Sigmoid colon (tissue), 7 donors: ENCODE measurements at regions of chr3 and their contacts with region 1.

Region 1: DNA sequence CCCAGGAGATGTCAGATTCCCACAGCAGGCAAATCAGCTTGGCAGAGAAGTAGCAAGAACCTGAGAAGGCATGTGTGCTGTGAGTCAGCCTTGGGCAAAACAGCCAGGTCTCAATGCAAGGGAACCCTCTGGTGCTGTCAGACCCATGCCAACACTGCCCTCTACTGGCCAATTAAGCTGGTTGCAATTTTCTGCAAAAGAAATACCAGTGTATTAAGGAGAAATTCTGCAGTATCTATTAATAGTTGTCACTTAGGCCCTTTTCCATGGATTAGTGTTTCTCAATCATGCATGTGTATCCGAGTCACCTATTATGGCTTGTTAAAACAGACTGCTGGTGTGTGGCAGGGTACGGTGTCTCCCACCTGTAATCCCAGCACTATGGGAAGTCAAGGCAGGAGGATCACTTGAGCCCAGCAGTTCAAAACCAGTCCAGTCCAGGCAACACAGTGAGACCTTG is 26.2 kb downstream of the MAP4 start:
- DNase-seq: peak; percentile 94
- H3K4me3 ChIP-seq: no peak overlapping the region
- H3K27ac ChIP-seq: peak overlapping the region in 2 of 4 donors; percentile 29 to 52
- H3K4me1 ChIP-seq: peaks cover 0 to 29% (median 11%) of the 10 kb centered on the region in 4 donors
- H3K27me3 ChIP-seq: no peaks in the 10 kb centered on the region
- CTCF ChIP-seq: peak; percentile 72 to 89 (median 86)
- EP300 ChIP-seq: no peak
- POLR2A ChIP-seq: no peak

Region 2: GRCh38 chr3:47836986-47837385 is 153.0 kb before region 1 on chr3:
- intact Hi-C with region 1: loop called (anchors 5 kb)
- DNase-seq: no peak
- H3K4me3 ChIP-seq: no peak overlapping the region
- H3K27ac ChIP-seq: no peak overlapping the region
- H3K4me1 ChIP-seq: no peaks in the 10 kb centered on the region
- H3K27me3 ChIP-seq: no peaks in the 10 kb centered on the region
- CTCF ChIP-seq: no peak
- EP300 ChIP-seq: no peak
- POLR2A ChIP-seq: no peak

Region 3: GRCh38 chr3:47890828-47891612 is 99.0 kb before region 1 on chr3:
- intact Hi-C with region 1: loop called (anchors 5 kb)
- DNase-seq: peak; percentile 92
- H3K4me3 ChIP-seq: no peak overlapping the region
- H3K27ac ChIP-seq: peak overlapping the region; percentile 37 to 75 (median 53)
- H3K4me1 ChIP-seq: peaks cover 0 to 34% (median 20%) of the 10 kb centered on the region in 4 donors
- H3K27me3 ChIP-seq: no peaks in the 10 kb centered on the region
- CTCF ChIP-seq: no peak
- EP300 ChIP-seq: peak in 1 of 4 donors; percentile 25
- POLR2A ChIP-seq: no peak

Region 4: DNA sequence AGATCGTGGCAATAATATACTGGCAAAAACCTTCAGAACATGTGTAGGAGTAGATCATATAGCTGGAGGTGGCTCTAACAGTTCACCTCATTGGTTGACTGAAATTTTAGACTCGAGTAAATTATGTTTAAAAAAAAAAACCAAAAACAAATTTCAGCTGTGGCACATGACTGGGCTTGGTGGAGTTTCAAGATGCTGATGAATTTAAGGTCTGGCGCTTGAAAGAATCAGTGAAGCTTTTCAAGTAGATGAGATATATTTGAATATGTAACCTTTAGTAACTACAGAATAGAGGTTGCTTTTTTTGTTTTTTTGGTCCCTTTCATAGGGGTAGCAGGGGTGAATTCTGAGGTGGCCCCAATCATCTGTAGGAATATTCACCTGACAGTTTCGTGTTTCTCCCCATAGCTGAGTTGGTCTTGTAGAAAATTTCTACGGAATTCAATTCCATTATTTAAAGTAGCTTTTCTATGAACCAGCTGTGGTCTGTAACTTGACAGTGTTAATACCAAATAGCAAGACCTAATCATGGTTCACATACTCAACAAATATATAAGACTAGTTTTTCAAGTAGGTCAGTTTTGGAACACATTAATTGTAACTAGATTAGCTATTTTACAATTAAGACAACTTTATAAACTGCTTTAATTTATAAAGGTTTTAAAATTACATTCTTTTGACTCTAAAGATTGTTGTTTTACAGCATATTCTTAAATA is 39.4 kb before region 1 on chr3:
- intact Hi-C with region 1: no loop called
- DNase-seq: no peak
- H3K4me3 ChIP-seq: no peak overlapping the region
- H3K27ac ChIP-seq: no peak overlapping the region
- H3K4me1 ChIP-seq: no peaks in the 10 kb centered on the region
- H3K27me3 ChIP-seq: no peaks in the 10 kb centered on the region
- CTCF ChIP-seq: no peak
- EP300 ChIP-seq: no peak
- POLR2A ChIP-seq: no peak

Region 5: GRCh38 chr3:48151058-48151806 is 161.2 kb after region 1 on chr3:
- intact Hi-C with region 1: loop called (anchors 2 kb)
- DNase-seq: peak; percentile 90
- H3K4me3 ChIP-seq: no peak overlapping the region
- H3K27ac ChIP-seq: peak overlapping the region in 3 of 4 donors; percentile 20 to 51 (median 49)
- H3K4me1 ChIP-seq: peaks cover 0 to 13% (median 6%) of the 10 kb centered on the region in 4 donors
- H3K27me3 ChIP-seq: no peaks in the 10 kb centered on the region
- CTCF ChIP-seq: peak; percentile 74 to 80 (median 78)
- EP300 ChIP-seq: no peak
- POLR2A ChIP-seq: no peak